ENCODE measurements at regions of chr1 and their contacts with region 1.

Region 1: GRCh38 chr1:23634842-23635651 is 56.6 kb upstream of the RPL11 start:
- DNase-seq: peak; percentile 12
- H3K4me3 ChIP-seq: peak overlapping the region; percentile 60
- CTCF ChIP-seq: peak; percentile 83

Region 2: GRCh38 chr1:23496490-23497181 is 138.4 kb before region 1 on chr1:
- CTCF ChIA-PET with region 1: interaction called, 125 read pairs
- POLR2A ChIA-PET with region 1: no interaction called
- DNase-seq: no peak
- H3K4me3 ChIP-seq: no peak overlapping the region
- CTCF ChIP-seq: no peak

Region 3: DNA sequence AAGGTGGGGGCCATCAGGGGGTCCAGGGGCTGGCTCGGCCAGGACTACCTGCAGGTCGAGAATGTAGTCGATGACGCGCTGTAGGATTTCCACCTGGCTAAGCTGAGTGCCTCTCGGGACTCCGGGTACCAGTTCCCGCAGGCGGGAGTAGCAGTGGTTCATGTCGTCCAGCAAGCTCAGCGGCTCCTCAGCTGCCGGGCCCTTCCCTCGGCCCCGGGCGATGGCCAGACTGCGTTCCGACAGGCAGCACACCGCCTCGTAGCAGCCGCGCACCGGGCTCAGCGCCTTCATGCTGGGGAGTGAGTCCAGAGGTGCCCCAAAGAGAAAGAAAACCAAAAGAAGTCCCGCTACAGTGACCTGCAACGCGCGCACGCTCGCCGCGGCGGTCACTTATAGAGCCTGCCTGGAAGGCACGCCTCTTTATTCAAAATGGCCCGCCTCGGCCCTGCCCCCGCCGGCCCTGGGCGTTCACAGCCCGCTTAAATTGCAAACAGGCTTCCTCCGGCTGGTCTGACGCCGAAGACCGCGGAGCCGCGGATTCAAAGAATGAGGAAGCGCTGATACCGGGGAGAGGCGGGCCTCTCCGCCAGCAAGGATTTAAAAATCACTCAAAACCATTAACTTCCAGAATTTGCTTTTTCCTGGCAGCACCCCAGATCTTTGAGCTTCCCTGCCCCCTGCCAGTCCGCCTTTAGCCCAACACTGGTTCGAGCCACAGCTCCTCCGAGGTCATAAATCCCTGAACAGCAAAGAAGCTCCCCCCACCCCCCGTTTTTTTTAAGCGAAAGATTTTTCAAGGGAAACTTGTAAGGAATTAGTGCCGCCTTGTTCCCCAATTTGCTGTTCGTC is 75.7 kb before region 1 on chr1 and contains the start of gene ID3:
- CTCF ChIA-PET with region 1: interaction called, 1,485 read pairs
- POLR2A ChIA-PET with region 1: interaction called, 53 read pairs
- DNase-seq: peak; percentile 91
- H3K4me3 ChIP-seq: peak within 1 kb of the TSS; percentile 87
- CTCF ChIP-seq: no peak

Region 4: DNA sequence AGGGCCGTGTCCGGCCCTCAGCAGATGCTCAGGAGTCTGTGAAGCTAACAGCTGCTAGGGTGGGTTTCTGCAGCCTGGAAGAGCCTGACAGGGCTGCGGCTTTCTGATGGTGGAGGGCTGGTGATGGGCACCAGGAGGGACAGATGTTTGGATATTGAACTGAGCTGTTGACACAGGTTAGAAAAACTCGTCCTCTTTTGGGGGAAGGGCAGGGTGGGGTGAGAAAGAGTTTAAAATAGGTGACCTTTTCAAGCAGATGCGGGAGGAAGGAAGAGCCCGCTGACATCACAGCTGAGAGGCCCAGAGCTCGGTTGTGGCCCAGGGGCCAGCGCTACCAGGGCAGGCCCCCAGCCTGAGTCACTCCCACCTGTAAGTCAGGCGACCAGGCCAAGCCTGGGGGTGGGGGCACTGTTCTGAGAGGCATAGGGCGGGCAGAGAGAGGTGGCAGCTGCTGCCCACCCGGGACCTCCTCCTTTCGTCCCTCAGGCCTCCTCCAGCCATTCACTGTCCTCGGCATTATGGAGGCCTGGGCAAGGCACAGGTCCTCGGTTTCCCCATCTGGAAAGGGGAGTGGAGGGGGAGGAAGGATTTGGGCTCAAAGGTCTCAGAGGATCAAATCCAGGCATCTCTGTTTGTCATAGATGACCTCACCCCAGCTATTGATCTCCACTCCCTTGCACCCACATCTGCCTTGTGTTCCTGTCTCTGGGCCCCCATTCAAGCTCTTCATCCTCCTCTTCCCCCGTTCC is 43.4 kb before region 1 on chr1:
- CTCF ChIA-PET with region 1: interaction called, 18 read pairs
- POLR2A ChIA-PET with region 1: interaction called, 3 read pairs
- DNase-seq: no peak
- H3K4me3 ChIP-seq: no peak overlapping the region
- CTCF ChIP-seq: no peak

Region 5: DNA sequence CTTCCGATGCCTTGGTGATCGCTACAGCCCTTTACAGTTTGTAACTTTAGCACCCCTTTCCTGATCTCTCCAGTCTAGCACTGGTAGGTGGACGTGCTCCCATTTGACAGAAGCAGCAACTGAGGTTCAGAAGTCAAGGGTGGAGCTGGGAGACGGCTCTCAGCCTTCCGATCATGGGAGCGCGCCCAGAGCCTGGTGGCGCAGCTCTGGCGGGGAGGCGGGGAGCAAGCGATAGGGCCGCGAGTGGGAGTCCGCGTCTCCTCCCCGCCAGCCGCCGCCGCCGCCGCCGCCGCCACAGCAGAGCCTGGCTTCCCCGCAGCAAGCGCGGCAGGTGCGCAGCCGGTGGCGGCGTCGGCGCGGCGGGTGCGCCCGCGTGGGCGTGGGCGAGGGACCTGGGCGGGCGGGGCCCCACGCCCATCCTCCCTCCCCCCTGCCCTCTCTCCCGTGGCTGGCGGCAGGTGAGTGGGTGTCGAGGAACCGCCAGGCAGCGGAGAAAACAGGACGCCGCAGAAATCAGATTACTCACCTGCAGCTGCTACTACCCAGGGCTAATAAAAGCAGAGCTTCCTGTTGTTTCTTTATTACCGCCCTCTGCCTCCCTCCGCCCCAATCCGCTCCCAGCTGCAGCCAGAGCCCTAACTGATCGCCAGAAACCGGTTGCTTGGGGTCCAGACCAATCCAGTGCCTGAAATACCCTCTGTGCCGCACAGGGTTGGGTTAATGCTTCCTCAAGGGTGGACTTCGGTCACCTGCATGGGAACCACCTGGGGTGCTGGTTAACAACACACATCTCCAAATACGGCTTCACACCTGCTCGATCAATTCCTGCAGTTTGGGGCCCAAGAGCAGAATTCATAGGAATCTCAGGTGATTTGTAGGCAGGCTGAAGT is 15.5 kb before region 1 on chr1:
- CTCF ChIA-PET with region 1: interaction called, 52 read pairs
- POLR2A ChIA-PET with region 1: no interaction called
- DNase-seq: no peak
- H3K4me3 ChIP-seq: peak overlapping the region; percentile 18; the same call in 1 of the 2 replicates
- CTCF ChIP-seq: no peak

Region 6: DNA sequence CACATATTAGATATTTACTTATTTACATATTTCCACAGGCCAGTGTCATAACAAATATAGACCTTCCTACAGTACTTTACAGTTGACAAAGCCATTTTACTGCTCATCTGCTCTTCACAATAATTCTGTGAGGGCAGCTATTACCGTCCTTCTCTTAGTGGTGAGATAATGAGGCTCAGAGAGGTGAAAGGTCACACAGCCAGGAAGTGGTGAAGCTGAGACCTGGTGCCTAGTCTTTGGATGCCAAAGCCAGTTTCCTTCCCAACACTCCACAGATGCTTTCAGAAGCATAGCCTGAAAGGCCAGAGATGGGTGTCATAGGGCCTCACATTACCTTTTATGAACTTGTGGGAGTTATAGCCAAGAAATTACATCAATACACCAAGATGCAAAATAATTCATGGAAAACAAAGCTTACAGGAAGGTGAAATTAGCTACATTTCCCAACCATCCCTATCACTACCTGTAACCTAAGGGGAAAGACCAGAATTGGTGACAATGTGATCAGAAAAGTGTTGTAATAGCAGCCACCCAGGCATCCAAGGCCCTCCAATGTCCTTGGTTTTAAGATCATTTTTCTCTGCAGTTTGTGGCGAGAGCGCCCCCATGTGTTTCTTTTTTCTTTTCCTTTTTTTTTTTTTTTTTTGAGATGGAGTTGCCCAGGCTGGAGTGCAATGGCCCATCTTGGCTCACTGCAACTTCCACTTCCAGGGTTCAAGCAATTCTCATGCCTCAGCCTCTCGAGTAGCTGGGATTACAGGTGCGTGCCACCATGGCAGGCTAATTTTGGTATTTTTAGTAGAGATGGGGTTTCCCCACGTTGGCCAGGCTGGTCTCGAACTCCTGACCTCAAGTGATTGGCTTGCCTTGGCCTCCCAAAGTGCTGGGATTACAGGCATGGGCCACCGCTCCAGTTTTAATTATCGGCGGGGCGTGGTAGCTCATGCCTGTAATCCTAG is 30.1 kb after region 1 on chr1:
- CTCF ChIA-PET with region 1: interaction called, 51 read pairs
- POLR2A ChIA-PET with region 1: no interaction called
- DNase-seq: no peak
- H3K4me3 ChIP-seq: no peak overlapping the region
- CTCF ChIP-seq: peak; percentile 1

Region 7: GRCh38 chr1:23777979-23778814 is 143.2 kb after region 1 on chr1 and contains the start of gene PITHD1:
- CTCF ChIA-PET with region 1: no interaction called
- POLR2A ChIA-PET with region 1: no interaction called
- DNase-seq: no peak
- H3K4me3 ChIP-seq: peak within 1 kb of the TSS; percentile 81
- CTCF ChIP-seq: no peak

Region 8: GRCh38 chr1:23936481-23937176 is 301.6 kb after region 1 on chr1:
- CTCF ChIA-PET with region 1: no interaction called
- POLR2A ChIA-PET with region 1: no interaction called
- DNase-seq: no peak
- H3K4me3 ChIP-seq: no peak overlapping the region
- CTCF ChIP-seq: no peak

Measured in AG04449 (cell line).